ENCODE measurements at regions of chr16 and their contacts with region 1.

Region 1: DNA sequence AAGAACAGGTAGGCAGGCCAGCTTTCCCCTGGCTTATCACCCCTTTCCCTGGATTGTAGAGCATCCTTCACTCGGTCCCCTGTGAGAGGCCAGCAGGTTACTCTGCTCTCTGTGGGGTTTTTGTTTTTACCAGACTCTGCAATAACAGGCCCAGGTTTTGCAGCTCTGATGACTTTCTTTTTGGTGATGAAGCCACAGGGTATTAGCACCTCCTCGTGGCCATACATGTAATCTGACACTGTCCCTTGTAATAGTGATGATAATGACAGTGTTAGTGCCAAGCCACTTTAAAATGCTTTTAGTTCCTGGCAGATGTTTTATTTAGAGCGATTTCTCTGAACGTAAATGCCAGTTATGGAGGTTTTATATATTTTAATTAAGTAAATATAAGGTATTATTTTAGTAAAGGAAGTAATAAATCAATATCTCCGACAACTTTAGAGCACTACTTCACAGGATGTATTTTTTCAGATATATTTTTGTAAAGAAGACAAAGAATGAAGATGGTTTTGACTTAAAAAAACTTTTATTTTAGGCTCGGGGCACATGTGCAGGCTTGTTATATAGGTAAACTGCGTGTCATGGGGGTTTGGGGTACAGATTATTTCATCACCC is 38.0 kb upstream of the CPHXL start:
- DNase-seq: peak; percentile 45 to 72 (median 58)
- ATAC-seq: peak; percentile 97
- H3K4me3 ChIP-seq: no peak overlapping the region
- H3K27ac ChIP-seq: no peak overlapping the region
- H3K4me1 ChIP-seq: no peaks in the 10 kb centered on the region; a peak in 1 of 5 replicates
- H3K27me3 ChIP-seq: no peaks in the 10 kb centered on the region; a peak in 1 of 5 replicates
- CTCF ChIP-seq: peak; percentile 77 to 93 (median 82)
- EP300 ChIP-seq: no peak
- POLR2A ChIP-seq: no peak
- RAD21 ChIP-seq: peak; percentile 91 to 96

Region 2: GRCh38 chr16:75198135-75198600 is 566.1 kb before region 1 on chr16:
- CTCF ChIA-PET with region 1: interaction called, 7 read pairs
- POLR2A ChIA-PET with region 1: no interaction called
- in situ Hi-C with region 1: loop called (anchors 5 kb)
- intact Hi-C with region 1: loop called (anchors 1 kb)
- DNase-seq: peak in 1 of 4 experiments; percentile 20
- ATAC-seq: peak; percentile 30
- H3K4me3 ChIP-seq: no peak overlapping the region
- H3K27ac ChIP-seq: no peak overlapping the region
- H3K4me1 ChIP-seq: peaks cover 0 to 8% of the 10 kb centered on the region in 2 experiments; a peak in 3 of 5 replicates
- H3K27me3 ChIP-seq: peaks cover 39 to 46% of the 10 kb centered on the region in 2 experiments
- CTCF ChIP-seq: no peak
- EP300 ChIP-seq: no peak
- POLR2A ChIP-seq: no peak
- RAD21 ChIP-seq: no peak

Region 3: GRCh38 chr16:75234856-75235696 is 529.2 kb before region 1 on chr16:
- CTCF ChIA-PET with region 1: interaction called, 3 read pairs
- POLR2A ChIA-PET with region 1: no interaction called
- in situ Hi-C with region 1: no loop called
- intact Hi-C with region 1: loop called (anchors 5 kb)
- DNase-seq: no peak
- ATAC-seq: no peak
- H3K4me3 ChIP-seq: no peak overlapping the region
- H3K27ac ChIP-seq: no peak overlapping the region
- H3K4me1 ChIP-seq: peaks cover 0 to 62% of the 10 kb centered on the region in 2 experiments; a peak in 3 of 5 replicates
- H3K27me3 ChIP-seq: no peaks in the 10 kb centered on the region
- CTCF ChIP-seq: no peak
- EP300 ChIP-seq: no peak
- POLR2A ChIP-seq: no peak
- RAD21 ChIP-seq: no peak

Region 4: DNA sequence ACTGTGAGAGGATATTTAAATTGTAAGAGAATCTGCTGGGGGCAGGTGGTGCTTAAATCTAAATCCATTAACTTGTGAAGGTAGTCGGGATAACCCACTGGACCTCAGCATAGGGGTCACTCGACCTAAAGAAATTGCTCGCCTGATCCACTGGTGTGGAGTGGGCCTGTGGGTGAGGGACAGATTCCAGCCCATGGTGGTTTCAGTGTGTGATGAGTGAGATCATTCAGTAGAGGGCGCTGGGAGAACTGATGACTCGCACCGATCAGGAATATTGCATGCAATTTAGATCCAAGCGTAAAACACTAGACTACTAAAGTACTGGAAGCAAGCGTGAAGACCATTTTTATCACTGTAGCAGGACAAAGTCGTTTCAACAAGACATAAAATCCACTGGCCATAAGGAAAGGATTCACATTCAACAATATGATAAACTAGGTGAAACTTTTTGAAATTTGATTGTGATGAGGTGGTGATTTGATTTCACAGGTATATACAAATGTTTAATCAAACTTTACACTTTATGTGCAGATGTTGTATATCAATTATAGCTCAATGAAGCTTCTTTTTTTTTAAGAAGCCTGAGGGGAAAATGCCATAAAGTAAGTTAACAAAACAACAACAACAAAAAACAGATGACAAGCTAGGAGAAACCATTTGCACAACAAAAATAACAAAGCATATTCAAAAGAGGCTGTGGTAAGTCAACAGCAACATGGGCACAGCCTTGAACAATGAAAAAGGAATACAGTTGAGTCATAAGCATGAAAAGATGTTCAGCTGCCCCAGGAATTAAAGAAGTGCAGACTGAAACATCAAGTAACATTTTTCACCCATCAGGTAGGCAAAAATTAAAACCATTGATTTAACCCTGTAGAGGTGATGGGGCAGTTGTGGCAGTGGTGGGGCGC is 292.3 kb before region 1 on chr16:
- CTCF ChIA-PET with region 1: interaction called, 10 read pairs
- POLR2A ChIA-PET with region 1: no interaction called
- in situ Hi-C with region 1: loop called (anchors 10 kb)
- intact Hi-C with region 1: loop called (anchors 1 kb)
- DNase-seq: peak; percentile 71 to 79 (median 73)
- ATAC-seq: peak; percentile 98
- H3K4me3 ChIP-seq: no peak overlapping the region
- H3K27ac ChIP-seq: no peak overlapping the region
- H3K4me1 ChIP-seq: no peaks in the 10 kb centered on the region
- H3K27me3 ChIP-seq: peaks cover 4 to 9% of the 10 kb centered on the region in 2 experiments; a peak in 3 of 5 replicates
- CTCF ChIP-seq: peak; percentile 81 to 86 (median 86)
- EP300 ChIP-seq: no peak
- POLR2A ChIP-seq: no peak
- RAD21 ChIP-seq: peak; percentile 74 to 92

Region 5: GRCh38 chr16:75622761-75623605 is 141.3 kb before region 1 on chr16 and contains the start of gene ADAT1:
- CTCF ChIA-PET with region 1: no interaction called
- POLR2A ChIA-PET with region 1: no interaction called
- in situ Hi-C with region 1: no loop called
- intact Hi-C with region 1: loop called (anchors 5 kb)
- DNase-seq: peak; percentile 87 to 99 (median 91)
- ATAC-seq: peak; percentile 92
- H3K4me3 ChIP-seq: peak within 1 kb of the TSS; percentile 62
- H3K27ac ChIP-seq: peak within 1 kb of the TSS; percentile 92
- H3K4me1 ChIP-seq: peaks cover 28 to 33% of the 10 kb centered on the region in 2 experiments
- H3K27me3 ChIP-seq: no peaks in the 10 kb centered on the region
- CTCF ChIP-seq: no peak
- EP300 ChIP-seq: no peak; the same call in 1 of the 2 replicates
- POLR2A ChIP-seq: peak; percentile 92
- RAD21 ChIP-seq: no peak
- polyA plus RNA-seq, gene ADAT1: 16.0 to 20.6 TPM

Region 6: GRCh38 chr16:75695704-75696103 is 68.6 kb before region 1 on chr16:
- CTCF ChIA-PET with region 1: no interaction called
- POLR2A ChIA-PET with region 1: interaction called, 3 read pairs
- in situ Hi-C with region 1: no loop called
- intact Hi-C with region 1: loop called (anchors 5 kb)
- DNase-seq: peak; percentile 37 to 58 (median 50)
- ATAC-seq: peak; percentile 77
- H3K4me3 ChIP-seq: no peak overlapping the region
- H3K27ac ChIP-seq: no peak overlapping the region
- H3K4me1 ChIP-seq: no peaks in the 10 kb centered on the region
- H3K27me3 ChIP-seq: peaks cover 8 to 12% of the 10 kb centered on the region in 2 experiments; a peak in 4 of 5 replicates
- CTCF ChIP-seq: peak; percentile 44 to 50 (median 49); a peak in 5 of 6 replicates
- EP300 ChIP-seq: no peak
- POLR2A ChIP-seq: no peak
- RAD21 ChIP-seq: 0 out of 4 replicates have a peak, but pooled peaks of 1 of the 2 experiments have one; percentile 8

Measured in K562 (cell line).